A673 (cell line): ENCODE measurements at regions of chr6 and their contacts with region 1.

Region 1: DNA sequence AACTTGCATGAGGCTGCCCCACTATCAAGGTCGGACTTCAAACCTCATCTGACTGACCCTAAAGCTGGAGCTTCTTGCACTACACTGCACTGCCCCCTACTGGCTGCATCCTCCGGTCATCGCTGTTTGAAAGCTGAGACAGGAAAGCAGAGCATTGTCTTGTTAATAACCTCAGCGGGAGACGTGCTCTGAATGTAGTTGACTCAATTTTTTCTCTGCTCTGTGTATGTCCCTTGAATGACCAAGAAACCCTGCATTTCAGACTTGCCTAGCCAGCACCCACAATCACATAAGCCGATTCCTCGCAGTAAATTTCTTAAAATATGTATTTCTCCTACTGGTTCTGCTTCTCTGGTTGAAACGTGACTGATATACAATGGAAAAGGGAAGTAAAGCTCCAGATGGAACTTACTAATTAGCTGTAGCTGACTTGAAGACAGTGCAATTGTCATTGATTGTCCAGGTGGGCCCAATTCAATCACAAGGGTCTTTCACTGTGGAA is 27.8 kb downstream of the TCF21 start:
- DNase-seq: peak; percentile 91
- H3K4me3 ChIP-seq: no peak overlapping the region
- H3K27ac ChIP-seq: no peak overlapping the region
- H3K4me1 ChIP-seq: peaks cover 4% of the 10 kb centered on the region
- H3K27me3 ChIP-seq: peaks cover 45% of the 10 kb centered on the region
- CTCF ChIP-seq: peak; percentile 96

Region 2: DNA sequence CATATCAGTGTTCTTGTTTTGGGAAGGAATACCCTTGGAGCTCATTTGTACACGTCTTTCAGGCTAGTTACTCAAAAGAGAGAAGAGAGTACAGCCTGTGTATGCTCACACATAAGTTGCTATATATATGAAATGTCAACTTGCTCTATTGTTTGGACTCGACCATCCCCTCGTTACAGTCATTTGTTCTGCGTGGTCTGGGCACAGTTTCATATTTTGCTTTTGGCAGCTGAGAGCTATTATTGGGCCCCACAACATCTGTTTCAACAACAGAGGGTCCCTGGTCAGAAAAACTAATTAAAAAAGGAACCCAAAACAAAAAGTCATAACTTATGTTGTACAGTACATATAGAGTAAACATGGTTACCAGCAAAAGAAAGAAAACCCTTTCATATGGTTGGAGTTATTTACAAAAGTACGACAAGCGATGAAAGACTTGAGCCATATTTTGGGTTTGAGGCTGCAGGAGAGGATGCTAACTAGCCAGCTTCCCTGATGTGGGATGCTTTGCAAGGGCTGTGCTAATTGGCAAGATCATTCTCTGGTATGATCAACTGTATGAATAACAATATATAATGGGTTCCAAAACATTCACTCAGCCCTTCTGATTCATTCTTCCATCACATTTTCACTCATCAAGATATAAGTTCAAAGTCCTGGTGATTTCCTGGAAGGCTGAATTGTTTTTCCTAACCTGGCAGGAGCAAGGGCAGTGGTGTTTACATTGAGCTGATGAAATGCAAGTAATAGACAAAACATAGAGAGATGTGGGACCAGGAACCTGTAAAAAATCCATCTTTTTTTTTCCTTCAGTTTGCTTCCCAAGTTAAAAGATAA is 964.5 kb before region 1 on chr6:
- CTCF ChIA-PET with region 1: no interaction called
- POLR2A ChIA-PET with region 1: no interaction called
- intact Hi-C with region 1: loop called (anchors 10 kb)
- DNase-seq: no peak
- H3K4me3 ChIP-seq: no peak overlapping the region
- H3K27ac ChIP-seq: no peak overlapping the region
- H3K4me1 ChIP-seq: no peaks in the 10 kb centered on the region
- H3K27me3 ChIP-seq: peaks cover 96% of the 10 kb centered on the region
- CTCF ChIP-seq: no peak

Region 3: DNA sequence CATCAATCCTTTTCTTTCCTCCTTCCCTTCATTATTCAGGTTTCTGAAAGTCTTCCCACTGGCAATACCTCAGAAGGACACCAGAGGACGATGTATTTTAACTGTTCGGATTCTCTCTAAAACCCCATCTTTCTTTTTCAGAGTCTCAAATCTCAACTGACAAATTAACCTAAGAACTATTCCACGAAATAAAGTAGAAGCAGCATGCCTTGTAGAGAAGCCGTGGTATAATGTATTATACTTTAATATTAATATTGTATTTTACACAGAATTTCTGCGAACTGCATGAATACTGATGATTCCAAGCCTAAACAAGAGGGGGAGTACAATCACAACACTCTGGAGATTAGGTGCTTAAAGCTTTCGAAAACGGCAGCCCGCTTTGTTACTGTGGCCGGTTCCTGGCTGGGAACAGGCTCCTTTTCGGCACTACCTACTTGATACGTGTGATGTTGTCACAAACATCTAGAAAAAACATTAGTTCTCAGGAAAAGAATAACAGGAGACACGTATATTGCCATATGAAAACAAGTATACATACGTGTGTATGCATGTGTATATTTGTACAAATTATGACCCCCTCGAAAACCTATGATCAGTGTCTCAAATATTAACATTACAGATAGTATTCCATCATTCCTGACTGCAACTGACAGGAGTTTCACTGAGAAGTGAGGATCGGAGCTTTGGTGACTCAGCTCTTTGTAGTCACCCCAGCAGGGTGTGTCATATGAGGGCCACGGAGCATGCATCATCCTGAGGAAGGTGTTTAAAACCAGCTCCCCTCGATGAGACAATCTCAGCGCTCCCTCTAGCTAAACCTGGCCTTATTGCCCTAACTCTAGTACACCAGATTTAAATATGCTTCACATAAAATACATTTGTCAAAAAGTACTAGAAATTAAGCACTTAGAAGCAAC is 347.5 kb before region 1 on chr6:
- CTCF ChIA-PET with region 1: interaction called, 32 read pairs
- POLR2A ChIA-PET with region 1: no interaction called
- intact Hi-C with region 1: loop called (anchors 1 kb)
- DNase-seq: peak; percentile 67
- H3K4me3 ChIP-seq: peak overlapping the region; percentile 27
- H3K27ac ChIP-seq: no peak overlapping the region
- H3K4me1 ChIP-seq: peaks cover 3% of the 10 kb centered on the region
- H3K27me3 ChIP-seq: peaks cover 90% of the 10 kb centered on the region
- CTCF ChIP-seq: peak; percentile 94

Region 4: DNA sequence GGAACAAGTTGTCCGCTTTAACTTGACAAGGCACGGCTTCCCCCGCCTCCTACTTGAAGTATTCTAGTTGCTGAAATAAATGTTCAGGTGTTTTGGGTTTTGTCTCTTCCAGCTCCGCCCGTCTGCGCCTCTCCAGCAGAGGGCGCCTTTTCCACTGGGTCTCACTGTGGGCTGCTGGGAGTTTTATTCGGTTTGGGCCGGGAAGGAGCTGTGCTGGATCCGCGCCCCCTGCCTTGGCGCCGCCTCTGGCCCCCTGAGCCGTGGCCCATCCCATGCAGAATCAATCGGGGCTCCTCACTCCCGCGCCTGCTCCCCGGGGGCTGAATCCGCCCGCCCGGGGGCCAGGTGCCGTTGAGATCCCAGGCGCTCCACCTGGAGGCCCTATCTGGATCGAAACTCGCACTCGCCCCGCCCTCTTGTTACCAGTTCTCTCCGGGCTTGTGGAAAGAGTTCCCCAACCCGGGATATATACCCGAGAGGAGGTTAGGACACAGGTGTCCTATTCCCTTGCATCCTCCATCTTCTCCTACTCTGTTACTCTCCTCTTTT is 78.8 kb before region 1 on chr6:
- CTCF ChIA-PET with region 1: interaction called, 11 read pairs
- POLR2A ChIA-PET with region 1: no interaction called
- intact Hi-C with region 1: loop called (anchors 5 kb)
- DNase-seq: peak; percentile 68
- H3K4me3 ChIP-seq: peak overlapping the region; percentile 37
- H3K27ac ChIP-seq: no peak overlapping the region
- H3K4me1 ChIP-seq: no peaks in the 10 kb centered on the region
- H3K27me3 ChIP-seq: peaks cover 54% of the 10 kb centered on the region
- CTCF ChIP-seq: peak; percentile 87

Region 5: GRCh38 chr6:134097114-134097707 is 180.5 kb after region 1 on chr6:
- CTCF ChIA-PET with region 1: interaction called, 103 read pairs
- POLR2A ChIA-PET with region 1: no interaction called
- intact Hi-C with region 1: no loop called
- DNase-seq: peak; percentile 80
- H3K4me3 ChIP-seq: no peak overlapping the region
- H3K27ac ChIP-seq: no peak overlapping the region
- H3K4me1 ChIP-seq: peaks cover 10% of the 10 kb centered on the region
- H3K27me3 ChIP-seq: no peaks in the 10 kb centered on the region
- CTCF ChIP-seq: peak; percentile 70